Activated CD4-positive, alpha-beta T cell treated with anti-CD3 and anti-CD28 coated beads, Interleukin-2, amount 10 ng/mL, durations not matched to agents 24 days and 14 days (primary cell): ENCODE measurements at regions of chr3 and their contacts with region 1.

Region 1: DNA sequence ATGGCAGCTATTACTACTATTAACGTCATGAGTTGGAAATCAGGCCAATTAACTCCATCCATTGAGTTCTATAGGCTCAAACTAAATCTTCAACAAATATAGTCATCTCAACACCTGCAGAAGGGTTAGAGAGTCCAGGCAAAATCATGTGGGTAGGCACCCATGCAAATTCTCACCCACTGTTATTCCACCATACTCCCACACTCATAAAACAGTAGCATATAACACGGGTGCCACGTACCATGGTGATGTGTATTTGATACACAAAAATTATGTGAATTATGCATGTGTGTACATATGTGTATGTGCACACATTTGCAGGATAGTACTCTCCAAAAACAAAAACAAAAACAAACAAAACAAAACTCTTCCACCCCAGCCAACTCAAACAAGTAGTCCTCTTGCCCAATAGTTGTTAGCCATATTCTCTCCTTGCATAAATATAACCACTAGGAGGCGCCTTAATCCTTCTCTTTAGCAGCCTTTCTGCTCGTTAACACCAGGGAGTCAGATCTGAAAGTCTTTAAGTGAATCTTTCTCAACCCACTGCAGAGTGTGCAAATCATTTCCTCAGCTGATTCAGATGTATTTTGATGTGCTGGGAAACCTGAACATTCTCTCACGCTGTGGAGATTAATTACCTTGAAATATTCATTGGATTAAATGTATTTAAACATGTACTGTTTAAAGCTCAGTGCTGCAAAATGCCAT is 38.0 kb upstream of the COPB2 start:
- DNase-seq: peak; percentile 79
- H3K4me3 Mint-ChIP-seq: no peak overlapping the region
- H3K27ac Mint-ChIP-seq: no peak overlapping the region
- H3K4me1 Mint-ChIP-seq: no peaks in the 10 kb centered on the region
- H3K27me3 Mint-ChIP-seq: no peaks in the 10 kb centered on the region

Region 2: GRCh38 chr3:138890555-138891187 is 536.8 kb before region 1 on chr3:
- intact Hi-C with region 1: no loop called
- DNase-seq: no peak
- H3K4me3 Mint-ChIP-seq: no peak overlapping the region
- H3K27ac Mint-ChIP-seq: no peak overlapping the region
- H3K4me1 Mint-ChIP-seq: peaks cover 2% of the 10 kb centered on the region
- H3K27me3 Mint-ChIP-seq: no peaks in the 10 kb centered on the region

Region 3: GRCh38 chr3:139519998-139520737 is 92.7 kb after region 1 on chr3:
- intact Hi-C with region 1: loop called (anchors 5 kb)
- DNase-seq: peak; percentile 67
- H3K4me3 Mint-ChIP-seq: no peak overlapping the region
- H3K27ac Mint-ChIP-seq: no peak overlapping the region
- H3K4me1 Mint-ChIP-seq: no peaks in the 10 kb centered on the region
- H3K27me3 Mint-ChIP-seq: no peaks in the 10 kb centered on the region

Region 4: GRCh38 chr3:139629033-139629432 is 201.6 kb after region 1 on chr3:
- intact Hi-C with region 1: loop called (anchors 5 kb)
- DNase-seq: peak; percentile 65
- H3K4me3 Mint-ChIP-seq: no peak overlapping the region
- H3K27ac Mint-ChIP-seq: no peak overlapping the region
- H3K4me1 Mint-ChIP-seq: no peaks in the 10 kb centered on the region
- H3K27me3 Mint-ChIP-seq: no peaks in the 10 kb centered on the region

Region 5: DNA sequence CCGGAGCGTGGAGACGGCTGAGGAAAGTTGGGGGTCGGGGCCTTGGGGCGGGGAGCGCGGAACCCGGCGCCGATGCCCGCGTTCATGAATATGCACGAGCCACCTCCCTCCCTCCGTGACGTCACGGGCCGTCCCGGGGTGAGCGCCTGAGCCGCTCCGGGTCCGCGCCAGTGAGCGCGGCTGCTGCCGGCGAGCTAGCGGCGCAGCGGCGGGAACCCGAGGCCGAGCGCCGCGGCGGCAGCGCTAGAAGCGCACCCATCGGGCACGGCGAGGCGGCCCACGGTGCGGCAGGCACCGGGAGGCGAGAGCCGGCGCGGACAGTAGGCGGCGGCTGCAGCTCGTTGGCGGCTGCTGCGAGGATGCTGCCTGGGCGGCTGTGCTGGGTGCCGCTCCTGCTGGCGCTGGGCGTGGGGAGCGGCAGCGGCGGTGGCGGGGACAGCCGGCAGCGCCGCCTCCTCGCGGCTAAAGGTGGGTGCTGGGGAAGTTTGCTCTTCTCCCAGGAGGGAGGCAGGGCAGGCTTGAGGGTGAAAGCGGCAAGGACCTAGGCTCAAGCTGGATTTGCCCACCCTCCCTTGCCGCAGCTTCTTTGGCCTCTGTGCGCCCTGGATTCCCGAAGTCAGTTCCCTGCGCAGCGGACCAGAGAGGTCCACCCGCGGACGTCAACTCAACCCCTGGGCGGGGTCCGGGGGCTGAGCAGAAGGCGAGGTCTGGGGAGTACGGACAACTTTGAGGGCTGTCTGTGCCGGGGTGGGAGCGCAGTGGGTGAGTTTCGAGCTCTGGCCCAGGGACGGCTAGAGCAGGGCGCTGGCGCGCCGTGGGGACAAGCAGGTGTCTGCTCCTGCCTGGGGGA is 507.8 kb after region 1 on chr3 and contains the start of gene CLSTN2:
- intact Hi-C with region 1: loop called (anchors 5 kb)
- DNase-seq: peak; percentile 67
- H3K4me3 Mint-ChIP-seq: peak within 1 kb of the TSS; percentile 37
- H3K27ac Mint-ChIP-seq: no peak within 1 kb of the TSS
- H3K4me1 Mint-ChIP-seq: peaks cover 6% of the 10 kb centered on the region
- H3K27me3 Mint-ChIP-seq: peaks cover 48% of the 10 kb centered on the region
- total RNA-seq, gene CLSTN2: not detected in 2 replicates

Region 6: DNA sequence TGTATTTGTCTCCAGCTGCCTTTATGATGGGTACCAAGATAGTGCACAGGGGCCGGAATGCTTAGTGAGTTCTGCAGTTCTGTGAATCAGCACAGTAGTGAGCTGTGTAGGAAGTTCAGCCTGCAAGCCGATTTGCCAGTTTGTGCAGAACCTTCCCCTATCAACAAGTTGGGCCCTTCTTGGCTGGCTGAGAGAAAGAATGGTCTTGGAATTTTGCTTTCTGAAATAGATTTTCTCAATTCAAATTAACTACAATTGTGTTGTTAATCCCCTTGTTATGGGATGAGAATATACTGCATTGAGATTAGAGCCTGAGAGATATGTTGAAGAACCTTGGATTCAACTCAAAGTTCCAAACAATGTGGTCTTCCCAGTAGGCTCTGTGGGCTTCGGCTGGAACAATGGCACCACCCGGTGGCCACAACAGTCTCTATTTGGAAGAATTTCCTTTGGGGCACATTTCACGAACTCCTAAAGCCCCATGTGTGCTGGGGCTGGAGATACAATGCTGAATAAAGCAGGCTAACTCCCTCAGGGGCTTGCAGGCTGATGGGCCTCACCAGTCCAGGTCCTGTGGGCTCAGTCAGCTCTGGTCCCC is 1309.5 kb after region 1 on chr3:
- intact Hi-C with region 1: loop called (anchors 5 kb)
- DNase-seq: peak; percentile 64
- H3K4me3 Mint-ChIP-seq: no peak overlapping the region
- H3K27ac Mint-ChIP-seq: no peak overlapping the region
- H3K4me1 Mint-ChIP-seq: peaks cover 5% of the 10 kb centered on the region
- H3K27me3 Mint-ChIP-seq: peaks cover 7% of the 10 kb centered on the region

Region 7: GRCh38 chr3:140863580-140864009 is 1436.2 kb after region 1 on chr3:
- intact Hi-C with region 1: loop called (anchors 1 kb)
- DNase-seq: peak; percentile 85
- H3K4me3 Mint-ChIP-seq: no peak overlapping the region
- H3K27ac Mint-ChIP-seq: no peak overlapping the region
- H3K4me1 Mint-ChIP-seq: no peaks in the 10 kb centered on the region
- H3K27me3 Mint-ChIP-seq: peaks cover 4% of the 10 kb centered on the region